Activated naive CD4-positive, alpha-beta T cell treated with anti-CD3 and anti-CD28 coated beads for 36 hours (primary cell): ENCODE measurements at regions of chr16 and their contacts with region 1.

Region 1: GRCh38 chr16:23149349-23149996 is at the start of gene USP31:
- DNase-seq: peak; percentile 93
- H3K4me3 Mint-ChIP-seq: peak within 1 kb of the TSS; percentile 95
- H3K27ac Mint-ChIP-seq: no peak within 1 kb of the TSS
- H3K4me1 Mint-ChIP-seq: peaks cover 21% of the 10 kb centered on the region
- H3K27me3 Mint-ChIP-seq: no peaks in the 10 kb centered on the region
- total RNA-seq, gene USP31: 5.1 to 5.2 TPM

Region 2: GRCh38 chr16:21962475-21962874 is 1187.0 kb before region 1 on chr16:
- CTCF ChIA-PET with region 1: no interaction called
- intact Hi-C with region 1: loop called (anchors 5 kb)
- DNase-seq: no peak
- H3K4me3 Mint-ChIP-seq: no peak overlapping the region
- H3K27ac Mint-ChIP-seq: no peak overlapping the region
- H3K4me1 Mint-ChIP-seq: peaks cover 8% of the 10 kb centered on the region
- H3K27me3 Mint-ChIP-seq: no peaks in the 10 kb centered on the region

Region 3: GRCh38 chr16:23104032-23104955 is 45.2 kb before region 1 on chr16:
- CTCF ChIA-PET with region 1: no interaction called
- intact Hi-C with region 1: loop called (anchors 5 kb)
- DNase-seq: no peak
- H3K4me3 Mint-ChIP-seq: no peak overlapping the region
- H3K27ac Mint-ChIP-seq: no peak overlapping the region
- H3K4me1 Mint-ChIP-seq: no peaks in the 10 kb centered on the region
- H3K27me3 Mint-ChIP-seq: no peaks in the 10 kb centered on the region

Region 4: GRCh38 chr16:23504451-23505179 is 355.1 kb after region 1 on chr16:
- CTCF ChIA-PET with region 1: no interaction called
- intact Hi-C with region 1: no loop called
- DNase-seq: peak; percentile 91
- H3K4me3 Mint-ChIP-seq: no peak overlapping the region
- H3K27ac Mint-ChIP-seq: no peak overlapping the region
- H3K4me1 Mint-ChIP-seq: peaks cover 67% of the 10 kb centered on the region
- H3K27me3 Mint-ChIP-seq: no peaks in the 10 kb centered on the region